HCT116 (cell line): ENCODE measurements at regions of chr2 and their contacts with region 1.

Region 1: DNA sequence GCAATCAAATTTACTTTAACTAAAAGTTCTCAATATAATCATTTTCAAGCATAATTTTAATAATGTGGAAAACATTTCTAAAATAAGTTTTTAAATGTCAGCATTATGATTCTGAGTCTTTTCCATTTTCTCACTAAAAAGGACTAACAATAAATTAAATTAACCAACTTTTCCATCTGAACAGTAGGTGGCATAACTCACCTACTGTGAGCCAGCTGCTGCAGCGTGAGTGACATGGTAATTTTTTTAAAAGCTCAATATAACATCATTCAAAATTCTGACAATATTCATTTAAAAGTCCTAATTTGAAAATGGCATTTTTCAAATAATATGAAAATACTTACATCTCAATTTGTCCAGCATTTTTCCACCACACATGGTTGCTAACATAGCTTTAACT is 66.5 kb downstream of the DTNB start:
- DNase-seq: no peak
- ATAC-seq: peak; percentile 47; the same call in 1 of the 2 replicates
- H3K4me3 ChIP-seq: no peak overlapping the region
- H3K27ac ChIP-seq: no peak overlapping the region
- H3K4me1 ChIP-seq: no peaks in the 10 kb centered on the region
- H3K27me3 ChIP-seq: no peaks in the 10 kb centered on the region
- CTCF ChIP-seq: peak; percentile 42 to 83 (median 62); a peak in 5 of 6 replicates
- POLR2A ChIP-seq: no peak
- RAD21 ChIP-seq: peak; percentile 84

Region 2: GRCh38 chr2:25618642-25619037 is 11.7 kb after region 1 on chr2:
- CTCF ChIA-PET with region 1: interaction called, 12 read pairs
- POLR2A ChIA-PET with region 1: no interaction called
- RAD21 ChIA-PET with region 1: no interaction called
- intact Hi-C with region 1: no loop called
- DNase-seq: peak; percentile 53
- ATAC-seq: peak; percentile 82
- H3K4me3 ChIP-seq: no peak overlapping the region
- H3K27ac ChIP-seq: no peak overlapping the region
- H3K4me1 ChIP-seq: peaks cover 12 to 15% of the 10 kb centered on the region in 2 experiments
- H3K27me3 ChIP-seq: no peaks in the 10 kb centered on the region
- CTCF ChIP-seq: no peak
- POLR2A ChIP-seq: no peak
- RAD21 ChIP-seq: no peak

Region 3: DNA sequence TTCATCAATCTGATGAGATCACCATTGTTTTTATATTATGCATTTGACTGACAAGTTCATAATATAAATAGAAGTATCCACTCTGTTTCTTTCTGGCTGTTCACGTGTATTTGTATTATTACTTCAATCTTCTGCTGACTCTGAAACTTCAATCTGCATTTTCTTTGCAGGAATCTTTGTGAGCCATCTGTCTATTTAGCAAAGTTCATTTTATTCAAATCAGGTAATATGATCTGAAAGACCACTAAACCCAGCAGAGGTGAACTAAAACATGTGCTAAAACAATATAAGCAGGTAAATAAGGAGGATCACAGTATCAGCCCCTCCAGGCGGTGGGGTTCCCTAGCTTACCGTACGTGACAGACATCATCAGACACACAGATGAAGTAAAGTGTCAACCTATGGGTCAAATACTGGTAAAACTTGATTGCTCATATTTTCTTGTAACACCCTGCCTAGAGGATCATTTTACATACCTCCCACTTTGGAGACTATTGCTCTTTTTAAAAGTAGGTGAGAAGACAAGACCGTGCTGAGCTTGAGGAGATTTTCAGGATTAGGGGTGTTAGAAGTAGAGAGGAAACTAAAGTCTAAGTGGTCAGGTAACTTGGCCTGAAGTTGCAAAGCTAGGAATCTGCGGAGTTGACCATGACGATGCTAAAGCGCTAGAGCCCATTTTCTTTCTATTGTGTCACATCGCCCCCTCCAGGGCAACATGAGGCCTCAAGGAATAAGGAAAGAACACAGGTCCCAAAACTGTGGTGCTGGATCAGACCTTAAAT is 57.5 kb after region 1 on chr2:
- CTCF ChIA-PET with region 1: interaction called, 87 read pairs
- POLR2A ChIA-PET with region 1: interaction called, 3 read pairs
- RAD21 ChIA-PET with region 1: interaction called, 10 to 14 read pairs
- intact Hi-C with region 1: loop called (anchors 1 kb)
- DNase-seq: peak; percentile 68
- ATAC-seq: peak; percentile 97
- H3K4me3 ChIP-seq: peak overlapping the region; percentile 0 to 33; a peak in 3 of 4 replicates
- H3K27ac ChIP-seq: peak overlapping the region; percentile 3; the same call in 1 of the 2 replicates
- H3K4me1 ChIP-seq: peaks cover 10 to 16% of the 10 kb centered on the region in 2 experiments
- H3K27me3 ChIP-seq: no peaks in the 10 kb centered on the region
- CTCF ChIP-seq: peak; percentile 81 to 90 (median 85)
- POLR2A ChIP-seq: no peak
- RAD21 ChIP-seq: peak; percentile 89

Region 4: GRCh38 chr2:25700221-25700660 is 93.3 kb after region 1 on chr2:
- CTCF ChIA-PET with region 1: interaction called, 48 read pairs
- POLR2A ChIA-PET with region 1: no interaction called
- RAD21 ChIA-PET with region 1: no interaction called
- intact Hi-C with region 1: loop called (anchors 1 kb)
- DNase-seq: peak; percentile 52
- ATAC-seq: peak; percentile 86
- H3K4me3 ChIP-seq: no peak overlapping the region
- H3K27ac ChIP-seq: no peak overlapping the region
- H3K4me1 ChIP-seq: peaks cover 2 to 6% of the 10 kb centered on the region in 2 experiments; a peak in 3 of 4 replicates
- H3K27me3 ChIP-seq: peaks cover 13% of the 10 kb centered on the region; the same call in 1 of the 2 replicates
- CTCF ChIP-seq: peak; percentile 71 to 77 (median 73)
- POLR2A ChIP-seq: no peak
- RAD21 ChIP-seq: peak; percentile 75

Region 5: DNA sequence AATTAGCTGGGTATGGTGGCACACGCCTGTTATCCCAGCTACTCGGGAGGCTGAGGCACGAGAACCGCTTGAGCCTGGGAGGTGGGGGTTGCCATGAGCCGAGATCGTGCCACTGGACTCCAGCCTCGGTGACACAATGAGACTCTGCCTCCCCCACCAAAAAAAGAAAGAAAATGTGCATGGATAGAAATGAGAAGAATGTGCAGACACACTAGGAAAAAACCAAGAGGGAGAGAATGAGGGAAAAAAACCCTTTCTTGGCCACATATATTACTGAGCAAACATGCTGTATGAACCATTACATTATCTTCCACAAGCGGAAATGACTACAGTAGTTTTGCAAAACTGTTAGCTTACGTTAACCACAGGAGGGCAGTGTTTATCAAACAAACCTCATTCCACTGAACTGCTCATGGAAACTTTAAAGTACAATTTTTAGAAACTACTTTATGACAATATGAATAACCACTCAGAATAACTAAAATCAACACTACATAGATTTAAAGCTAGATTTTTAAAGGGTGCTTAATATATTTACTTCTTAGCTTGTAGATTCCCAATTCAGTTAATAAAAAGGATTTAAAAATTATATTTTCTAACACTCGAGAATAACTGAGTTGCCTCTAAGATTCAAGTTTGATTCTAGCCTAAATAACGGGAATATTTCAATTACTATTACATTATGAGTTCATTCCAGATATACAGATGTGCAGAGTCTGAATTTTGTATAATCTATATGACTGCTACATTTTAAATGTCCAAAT is 245.0 kb after region 1 on chr2:
- CTCF ChIA-PET with region 1: interaction called, 8 read pairs
- POLR2A ChIA-PET with region 1: no interaction called
- RAD21 ChIA-PET with region 1: no interaction called
- intact Hi-C with region 1: loop called (anchors 5 kb)
- DNase-seq: peak; percentile 41
- ATAC-seq: peak; percentile 87
- H3K4me3 ChIP-seq: no peak overlapping the region
- H3K27ac ChIP-seq: no peak overlapping the region
- H3K4me1 ChIP-seq: peaks cover 0 to 9% of the 10 kb centered on the region in 2 experiments; a peak in 3 of 4 replicates
- H3K27me3 ChIP-seq: no peaks in the 10 kb centered on the region
- CTCF ChIP-seq: peak; percentile 62 to 75 (median 68); a peak in 5 of 6 replicates
- POLR2A ChIP-seq: no peak
- RAD21 ChIP-seq: peak; percentile 74